ENCODE measurements at regions of chr2 and their contacts with region 1.

Region 1: GRCh38 chr2:231297108-231297908 is 98.2 kb upstream of the B3GNT7 start:
- DNase-seq: no peak
- ATAC-seq: peak; percentile 71

Region 2: DNA sequence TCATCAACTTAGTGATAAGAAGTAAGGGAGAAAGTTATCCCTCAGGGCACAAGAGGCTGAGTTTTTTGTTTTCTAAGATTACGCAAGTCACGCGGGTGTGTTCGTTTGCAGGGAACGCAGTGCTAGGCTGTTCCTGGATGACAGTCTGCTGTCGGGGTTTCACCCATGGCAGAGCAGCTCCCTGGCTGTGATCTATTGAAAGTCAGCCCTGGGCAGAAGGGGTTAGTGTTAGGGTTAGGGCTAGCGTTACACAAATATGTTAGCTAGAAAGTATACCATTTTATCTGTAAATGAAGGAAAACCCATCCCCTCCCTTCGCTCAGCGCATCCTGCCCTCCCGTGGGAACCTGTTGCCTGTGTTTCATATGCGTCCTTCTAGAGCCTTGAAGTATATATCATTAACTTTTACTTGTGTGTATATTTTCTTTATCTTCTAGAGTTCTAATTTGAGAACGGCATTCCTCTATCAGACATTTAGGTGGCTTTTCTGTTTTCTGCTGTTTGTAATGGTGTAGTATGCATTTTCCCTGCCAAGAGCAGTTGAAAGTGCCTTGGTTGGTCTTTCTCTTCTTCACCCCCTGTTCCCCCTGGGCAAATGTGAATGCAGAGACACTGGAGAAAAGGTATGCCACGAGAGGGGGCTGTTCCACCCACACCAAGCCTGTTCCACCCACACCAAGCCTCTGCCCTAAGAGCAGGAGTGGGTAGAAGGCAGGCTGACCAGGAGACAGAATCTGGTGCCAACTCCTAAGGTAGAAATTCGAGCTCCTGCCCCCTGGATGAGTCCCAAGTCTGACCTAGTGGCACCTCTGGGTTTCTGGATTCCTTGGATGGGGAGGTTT is 51.8 kb before region 1 on chr2:
- intact Hi-C with region 1: no loop called
- DNase-seq: no peak
- ATAC-seq: no peak

Region 3: GRCh38 chr2:231318436-231318835 is 21.1 kb after region 1 on chr2:
- intact Hi-C with region 1: loop called (anchors 1 kb)
- DNase-seq: no peak
- ATAC-seq: peak; percentile 92

Region 4: DNA sequence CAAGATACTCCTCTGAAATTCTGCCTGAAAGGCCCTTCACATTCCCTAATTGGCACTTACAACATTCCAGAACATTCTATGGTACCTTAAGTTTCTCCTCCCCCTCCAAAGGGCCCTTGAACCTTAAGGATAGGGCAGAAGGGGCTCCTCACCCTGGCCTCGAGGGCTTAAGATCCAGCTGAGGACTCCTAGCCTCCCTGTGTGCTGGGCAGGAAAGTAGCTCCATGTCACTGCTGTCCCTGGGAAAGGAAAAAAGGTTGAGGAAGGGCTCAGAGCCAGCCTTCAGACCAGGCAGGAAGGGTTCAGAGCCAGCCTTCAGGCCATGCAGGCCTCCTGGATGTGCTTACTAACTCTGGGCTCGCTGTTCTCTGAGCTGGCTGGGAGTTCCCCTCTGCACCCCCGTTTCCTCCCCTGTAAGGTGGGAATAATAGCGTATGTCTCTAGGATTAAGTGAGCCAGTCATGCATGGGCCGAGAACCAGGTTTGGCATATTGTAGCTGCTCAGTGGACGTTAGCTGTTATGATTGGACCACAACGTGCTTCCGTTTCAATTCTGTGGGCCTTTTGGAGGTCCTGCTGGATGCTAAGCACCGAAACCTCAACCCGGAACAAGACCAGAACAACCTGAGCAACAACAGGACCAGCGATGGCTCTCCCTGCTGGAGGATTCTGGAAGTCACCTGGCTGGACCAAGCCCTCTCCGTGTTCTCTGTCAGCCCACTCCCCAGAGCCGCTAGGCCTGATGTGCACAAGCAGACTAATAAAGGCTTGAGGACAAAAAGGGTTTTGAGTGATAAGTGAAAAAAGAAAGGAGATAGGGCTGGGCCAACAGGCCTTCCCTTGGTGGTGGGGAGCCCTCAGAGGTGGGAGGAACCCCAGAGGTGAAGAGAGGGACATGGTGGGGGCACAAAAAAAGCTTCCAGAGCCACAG is 97.2 kb after region 1 on chr2:
- intact Hi-C with region 1: loop called (anchors 2 kb)
- DNase-seq: no peak
- ATAC-seq: no peak

Region 5: GRCh38 chr2:231489990-231490389 is 192.7 kb after region 1 on chr2:
- intact Hi-C with region 1: no loop called
- DNase-seq: no peak
- ATAC-seq: no peak

Region 6: GRCh38 chr2:231810905-231811304 is 513.6 kb after region 1 on chr2:
- intact Hi-C with region 1: no loop called
- DNase-seq: no peak
- ATAC-seq: peak; percentile 48

Measured in Right ventricle myocardium inferior (tissue), 1 donor.